ENCODE measurements at regions of chr3 and their contacts with region 1.

Region 1: GRCh38 chr3:9994086-9994844 is 7.6 kb upstream of the EMC3 start:
- DNase-seq: no peak
- ATAC-seq: no peak
- H3K4me3 ChIP-seq: no peak overlapping the region
- H3K4me3 Mint-ChIP-seq: no peak overlapping the region
- H3K27ac ChIP-seq: no peak overlapping the region
- H3K27ac Mint-ChIP-seq: no peak overlapping the region
- H3K4me1 ChIP-seq: no peaks in the 10 kb centered on the region
- H3K4me1 Mint-ChIP-seq: no peaks in the 10 kb centered on the region
- H3K27me3 ChIP-seq: no peaks in the 10 kb centered on the region
- H3K27me3 Mint-ChIP-seq: no peaks in the 10 kb centered on the region
- CTCF ChIP-seq: no peak

Region 2: DNA sequence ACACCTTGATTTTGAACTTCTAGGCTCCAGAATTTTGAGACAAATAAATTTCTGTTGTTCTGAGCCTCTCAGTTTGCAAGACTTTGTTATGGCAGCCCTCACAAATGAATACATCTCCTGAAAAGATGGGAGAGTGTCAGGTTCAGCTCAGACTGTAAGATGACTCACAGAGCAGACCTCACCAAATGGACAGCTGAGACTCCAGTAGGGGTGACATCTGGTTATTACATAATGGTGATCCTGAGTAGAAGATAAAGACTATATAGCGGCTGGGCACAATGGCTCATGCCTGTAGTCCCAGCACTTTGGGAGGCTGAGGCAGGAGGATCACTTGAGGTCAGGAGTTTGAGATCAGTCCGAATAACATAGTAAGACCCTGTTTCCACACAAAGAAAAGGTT is 371.1 kb before region 1 on chr3:
- intact Hi-C with region 1: no loop called
- DNase-seq: no peak
- ATAC-seq: no peak
- H3K4me3 ChIP-seq: no peak overlapping the region
- H3K4me3 Mint-ChIP-seq: no peak overlapping the region
- H3K27ac ChIP-seq: no peak overlapping the region
- H3K27ac Mint-ChIP-seq: no peak overlapping the region
- H3K4me1 ChIP-seq: no peaks in the 10 kb centered on the region
- H3K4me1 Mint-ChIP-seq: no peaks in the 10 kb centered on the region
- H3K27me3 ChIP-seq: no peaks in the 10 kb centered on the region
- H3K27me3 Mint-ChIP-seq: peaks cover 7 to 22% of the 10 kb centered on the region in 2 donors
- CTCF ChIP-seq: no peak

Region 3: DNA sequence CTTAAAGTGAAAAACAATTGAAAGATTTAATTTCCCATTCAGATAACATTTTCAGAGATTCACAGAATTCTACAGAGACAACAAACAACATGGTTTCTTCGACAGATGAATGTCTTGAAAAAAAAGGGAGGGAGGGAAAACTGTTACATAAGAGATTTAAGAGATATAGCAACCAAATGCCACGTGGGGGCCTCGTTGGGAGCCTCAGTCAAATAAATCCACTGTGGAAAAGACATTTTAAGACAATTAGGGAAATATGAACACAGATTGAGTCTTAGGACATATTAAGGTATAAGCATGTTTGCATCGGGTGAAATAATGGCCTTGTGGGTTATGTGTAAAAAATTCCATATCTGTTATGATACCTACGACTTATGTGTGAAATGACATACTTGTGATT is 37.1 kb before region 1 on chr3:
- intact Hi-C with region 1: no loop called
- DNase-seq: no peak
- ATAC-seq: no peak
- H3K4me3 ChIP-seq: no peak overlapping the region
- H3K4me3 Mint-ChIP-seq: no peak overlapping the region
- H3K27ac ChIP-seq: no peak overlapping the region
- H3K27ac Mint-ChIP-seq: no peak overlapping the region
- H3K4me1 ChIP-seq: peaks cover 3% of the 10 kb centered on the region
- H3K4me1 Mint-ChIP-seq: peaks cover 8 to 10% of the 10 kb centered on the region in 2 donors
- H3K27me3 ChIP-seq: no peaks in the 10 kb centered on the region
- H3K27me3 Mint-ChIP-seq: no peaks in the 10 kb centered on the region
- CTCF ChIP-seq: no peak

Region 4: GRCh38 chr3:10047876-10048275 is 53.6 kb after region 1 on chr3:
- intact Hi-C with region 1: loop called (anchors 1 kb)
- DNase-seq: no peak
- ATAC-seq: no peak
- H3K4me3 ChIP-seq: no peak overlapping the region
- H3K4me3 Mint-ChIP-seq: no peak overlapping the region
- H3K27ac ChIP-seq: no peak overlapping the region
- H3K27ac Mint-ChIP-seq: no peak overlapping the region
- H3K4me1 ChIP-seq: no peaks in the 10 kb centered on the region
- H3K4me1 Mint-ChIP-seq: no peaks in the 10 kb centered on the region
- H3K27me3 ChIP-seq: no peaks in the 10 kb centered on the region
- H3K27me3 Mint-ChIP-seq: no peaks in the 10 kb centered on the region
- CTCF ChIP-seq: no peak

Region 5: GRCh38 chr3:10173926-10174435 is 179.7 kb after region 1 on chr3:
- intact Hi-C with region 1: no loop called
- DNase-seq: no peak
- ATAC-seq: peak in 2 of 3 donors; percentile 48 to 75
- H3K4me3 ChIP-seq: no peak overlapping the region
- H3K4me3 Mint-ChIP-seq: no peak overlapping the region
- H3K27ac ChIP-seq: peak overlapping the region; percentile 25
- H3K27ac Mint-ChIP-seq: peak overlapping the region in 1 of 2 donors; percentile 72
- H3K4me1 ChIP-seq: peaks cover 13% of the 10 kb centered on the region
- H3K4me1 Mint-ChIP-seq: peaks cover 13 to 20% of the 10 kb centered on the region in 2 donors
- H3K27me3 ChIP-seq: no peaks in the 10 kb centered on the region
- H3K27me3 Mint-ChIP-seq: no peaks in the 10 kb centered on the region
- CTCF ChIP-seq: no peak

Measured in natural killer cell (primary cell).